ENCODE measurements at regions of chr17 and their contacts with region 1.

Region 1: GRCh38 chr17:28854457-28855350 is at the start of gene ERAL1:
- DNase-seq: peak; percentile 93
- ATAC-seq: peak; percentile 100
- H3K4me3 Mint-ChIP-seq: peak within 1 kb of the TSS; percentile 80
- H3K27ac Mint-ChIP-seq: peak within 1 kb of the TSS; percentile 81
- H3K4me1 Mint-ChIP-seq: peaks cover 24% of the 10 kb centered on the region
- H3K27me3 Mint-ChIP-seq: no peaks in the 10 kb centered on the region
- total RNA-seq, gene ERAL1: 51.5 to 74.8 TPM

Region 2: DNA sequence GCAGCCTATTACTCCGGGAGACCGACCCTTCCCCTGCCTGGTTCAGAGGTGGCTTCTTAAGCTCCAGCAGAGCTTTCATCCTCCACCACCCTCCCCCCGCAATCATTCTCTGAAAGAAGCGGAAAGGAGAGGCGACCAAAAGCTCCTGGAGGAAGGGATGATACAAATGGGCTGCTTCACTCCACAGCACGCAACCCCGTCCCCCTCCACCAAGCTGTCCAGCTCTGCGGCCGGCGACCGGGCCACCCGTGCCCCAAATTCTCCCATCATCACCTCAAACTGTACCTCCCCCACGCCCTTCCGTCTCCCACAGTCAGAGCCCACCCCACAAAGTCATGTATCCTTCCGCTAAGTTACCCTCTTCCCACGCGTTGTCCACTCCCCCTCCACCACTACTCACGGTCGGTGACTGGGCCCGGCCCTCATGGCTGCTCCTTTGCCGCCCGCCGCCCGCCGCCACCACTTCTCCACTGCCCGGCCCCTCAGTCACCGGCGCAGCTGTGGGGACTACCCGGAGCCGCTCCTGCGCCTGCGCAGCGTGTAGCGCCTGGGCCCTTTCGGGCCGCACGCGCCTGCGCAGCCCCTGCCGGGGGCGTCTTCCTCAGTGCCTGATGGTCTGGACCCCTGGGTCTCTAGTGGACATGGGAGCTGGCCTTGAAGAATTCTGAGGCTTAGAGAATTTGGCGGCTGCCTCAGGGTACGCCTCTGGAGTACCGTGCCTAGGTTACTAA is 12.3 kb before region 1 on chr17 and contains the start of gene FAM222B:
- CTCF ChIA-PET with region 1: interaction called, 3 read pairs
- POLR2A ChIA-PET with region 1: interaction called, 4 read pairs
- intact Hi-C with region 1: loop called in 1 of 2 experiments (anchors 1 kb)
- DNase-seq: peak; percentile 93
- ATAC-seq: peak; percentile 99
- H3K4me3 Mint-ChIP-seq: peak within 1 kb of the TSS; percentile 93
- H3K27ac Mint-ChIP-seq: peak within 1 kb of the TSS; percentile 90
- H3K4me1 Mint-ChIP-seq: peaks cover 20% of the 10 kb centered on the region
- H3K27me3 Mint-ChIP-seq: no peaks in the 10 kb centered on the region
- total RNA-seq, gene FAM222B: 16.8 to 20.8 TPM

Region 3: GRCh38 chr17:28878981-28879380 is 24.3 kb after region 1 on chr17:
- CTCF ChIA-PET with region 1: interaction called, 3 read pairs
- POLR2A ChIA-PET with region 1: no interaction called
- intact Hi-C with region 1: loop called in 1 of 2 experiments (anchors 2 kb)
- DNase-seq: peak; percentile 55
- ATAC-seq: no peak
- H3K4me3 Mint-ChIP-seq: no peak overlapping the region
- H3K27ac Mint-ChIP-seq: no peak overlapping the region
- H3K4me1 Mint-ChIP-seq: peaks cover 31% of the 10 kb centered on the region
- H3K27me3 Mint-ChIP-seq: no peaks in the 10 kb centered on the region

Region 4: DNA sequence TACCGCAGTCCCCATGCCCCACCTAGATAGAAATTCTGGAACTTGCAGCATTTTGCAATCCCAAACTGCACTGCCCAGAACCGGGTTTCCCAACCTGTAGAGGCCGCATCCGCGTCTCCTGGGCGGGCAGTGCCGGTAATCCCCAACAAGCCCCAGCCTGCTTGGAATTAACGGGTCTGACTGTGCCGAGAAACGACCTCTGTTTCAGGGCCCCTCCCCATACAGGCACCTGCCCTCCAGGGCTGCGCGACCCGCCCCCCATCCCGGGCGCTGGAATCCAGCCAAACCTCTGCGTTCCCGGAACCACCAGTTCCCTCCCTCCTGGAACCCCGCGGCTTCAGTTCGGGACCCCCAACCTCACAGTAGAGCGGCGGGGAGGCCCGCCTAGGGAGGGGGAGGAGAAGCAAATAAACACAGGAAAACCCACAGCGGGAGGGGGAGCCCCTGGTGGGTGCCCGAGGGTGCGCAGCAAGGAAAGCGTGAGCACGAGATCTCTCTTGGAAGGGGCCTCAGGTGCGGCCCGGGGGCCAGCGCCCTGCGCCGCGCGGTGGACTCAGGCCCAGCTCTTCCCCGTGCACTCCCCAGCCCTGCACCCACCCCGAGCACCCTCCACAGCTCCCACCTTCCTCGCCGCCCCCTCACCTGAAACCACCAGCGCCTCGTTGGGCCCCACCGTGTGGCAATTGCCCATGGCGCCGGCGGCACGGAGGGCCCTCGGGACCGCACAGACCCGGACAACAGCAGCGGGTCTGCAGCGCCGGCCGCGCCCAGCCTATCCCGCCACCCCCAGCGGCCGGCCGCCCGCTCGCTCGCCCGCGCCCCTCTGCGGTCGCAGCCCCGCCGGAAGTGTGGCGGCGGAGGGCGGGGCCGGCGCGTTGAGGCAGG is 42.4 kb after region 1 on chr17 and contains the start of gene FLOT2:
- CTCF ChIA-PET with region 1: interaction called, 4 read pairs
- POLR2A ChIA-PET with region 1: no interaction called
- intact Hi-C with region 1: loop called (anchors 1 to 2 kb)
- DNase-seq: peak; percentile 84
- ATAC-seq: peak; percentile 59
- H3K4me3 Mint-ChIP-seq: peak within 1 kb of the TSS; percentile 93
- H3K27ac Mint-ChIP-seq: peak within 1 kb of the TSS; percentile 93
- H3K4me1 Mint-ChIP-seq: peaks cover 73% of the 10 kb centered on the region
- H3K27me3 Mint-ChIP-seq: no peaks in the 10 kb centered on the region
- total RNA-seq, gene FLOT2: 81.3 to 88.4 TPM

Region 5: DNA sequence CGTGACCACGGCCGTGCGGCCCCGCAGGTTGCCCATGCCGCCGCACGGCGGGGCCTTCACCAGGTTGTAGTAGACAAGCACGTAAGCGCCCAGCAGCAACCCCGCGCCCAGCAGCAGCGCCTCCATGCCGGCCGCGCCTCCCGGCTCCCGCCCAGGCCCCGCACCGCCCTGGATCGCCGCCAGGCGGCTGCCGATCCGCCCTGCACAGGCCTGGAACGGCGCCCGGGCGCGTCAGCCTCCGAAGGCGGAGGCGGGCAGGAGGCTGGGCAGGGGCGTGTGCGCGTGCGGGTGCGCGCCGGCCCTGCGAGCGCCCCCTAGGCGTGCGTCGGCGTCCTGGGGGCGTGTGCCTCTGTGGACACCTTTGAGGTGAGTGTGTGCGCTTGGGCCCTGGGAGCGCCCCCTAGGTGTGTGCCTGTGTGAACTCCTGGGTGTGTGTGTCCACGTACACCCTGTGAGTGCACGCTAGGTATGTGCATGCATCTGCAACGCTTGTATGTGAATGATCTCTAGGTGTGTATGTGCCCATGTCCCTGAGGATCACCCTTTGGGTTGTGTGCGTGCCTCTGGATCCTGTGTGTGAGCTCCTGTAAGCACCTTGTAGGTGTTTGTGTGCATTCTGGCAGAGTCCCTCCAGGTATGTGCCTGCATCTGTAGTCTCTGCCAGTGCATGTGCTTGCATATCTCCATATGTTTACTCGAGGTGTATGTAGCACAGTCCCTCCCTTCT is 48.3 kb after region 1 on chr17 and contains the start of gene DHRS13:
- CTCF ChIA-PET with region 1: interaction called, 11 read pairs
- POLR2A ChIA-PET with region 1: no interaction called
- intact Hi-C with region 1: loop called in 1 of 2 experiments (anchors 1 kb)
- DNase-seq: peak; percentile 97
- ATAC-seq: peak; percentile 89
- H3K4me3 Mint-ChIP-seq: peak within 1 kb of the TSS; percentile 87
- H3K27ac Mint-ChIP-seq: peak within 1 kb of the TSS; percentile 92
- H3K4me1 Mint-ChIP-seq: peaks cover 34% of the 10 kb centered on the region
- H3K27me3 Mint-ChIP-seq: no peaks in the 10 kb centered on the region
- total RNA-seq, gene DHRS13: 23.3 to 29.5 TPM

Measured in activated CD4-positive, alpha-beta T cell treated with anti-CD3 and anti-CD28 coated beads for 36 hours (primary cell).